Gastrocnemius medialis (tissue), 4 donors: ENCODE measurements at regions of chr1 and their contacts with region 1.

Region 1: GRCh38 chr1:152109998-152110859 is 5.0 kb downstream of the TCHH start:
- DNase-seq: no peak
- ATAC-seq: no peak
- H3K4me3 ChIP-seq: peak overlapping the region; percentile 36 to 52 (median 48)
- H3K27ac ChIP-seq: no peak overlapping the region
- H3K4me1 ChIP-seq: peaks cover 5 to 14% of the 10 kb centered on the region in 2 donors
- H3K27me3 ChIP-seq: peaks cover 85 to 92% (median 89%) of the 10 kb centered on the region in 3 donors
- CTCF ChIP-seq: no peak
- POLR2A ChIP-seq: no peak

Region 2: DNA sequence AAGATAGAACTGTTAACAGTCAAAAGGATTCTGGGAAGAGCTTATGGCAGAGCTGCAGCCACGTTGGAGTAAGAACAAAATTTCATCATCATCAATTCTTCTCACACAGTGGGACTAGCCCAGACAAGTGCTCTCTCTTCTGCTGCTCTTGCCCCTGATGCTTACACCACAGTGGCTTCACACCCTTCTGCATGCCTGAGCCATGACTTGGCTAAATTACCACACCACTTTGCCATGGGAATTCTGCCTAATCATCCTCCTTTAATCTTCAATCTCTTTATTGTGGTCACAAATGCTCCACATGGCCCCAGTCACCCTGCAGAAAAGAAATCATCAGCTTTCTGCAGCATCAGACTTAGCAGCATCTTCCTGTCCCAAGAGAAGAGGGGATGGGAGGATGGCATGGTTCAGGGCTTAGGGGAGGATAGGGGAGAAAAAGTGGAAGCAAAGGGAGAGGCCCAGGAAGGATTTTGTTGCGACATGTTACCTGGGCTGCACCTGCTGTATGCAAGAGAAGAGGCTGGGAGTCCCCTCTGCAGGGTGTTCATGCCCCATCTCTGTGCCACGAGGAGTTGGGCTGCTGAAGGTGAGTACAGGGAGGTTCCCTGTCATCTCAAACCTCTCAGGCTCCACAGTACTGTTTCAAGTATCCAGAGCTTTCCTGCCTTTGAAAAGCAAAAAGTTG is 57.7 kb after region 1 on chr1:
- in situ Hi-C with region 1: loop called in 1 of 4 experiments (anchors 10 kb)
- intact Hi-C with region 1: no loop called
- DNase-seq: no peak
- ATAC-seq: peak in 1 of 2 donors; percentile 35
- H3K4me3 ChIP-seq: no peak overlapping the region
- H3K27ac ChIP-seq: peak overlapping the region in 2 of 4 donors; percentile 2 to 53
- H3K4me1 ChIP-seq: peaks cover 0 to 3% of the 10 kb centered on the region in 2 donors
- H3K27me3 ChIP-seq: no peaks in the 10 kb centered on the region
- CTCF ChIP-seq: no peak
- POLR2A ChIP-seq: no peak